Activated CD4-positive, alpha-beta memory T cell treated with anti-CD3 and anti-CD28 coated beads for 36 hours (primary cell): ENCODE measurements at regions of chr7 and their contacts with region 1.

Region 1: DNA sequence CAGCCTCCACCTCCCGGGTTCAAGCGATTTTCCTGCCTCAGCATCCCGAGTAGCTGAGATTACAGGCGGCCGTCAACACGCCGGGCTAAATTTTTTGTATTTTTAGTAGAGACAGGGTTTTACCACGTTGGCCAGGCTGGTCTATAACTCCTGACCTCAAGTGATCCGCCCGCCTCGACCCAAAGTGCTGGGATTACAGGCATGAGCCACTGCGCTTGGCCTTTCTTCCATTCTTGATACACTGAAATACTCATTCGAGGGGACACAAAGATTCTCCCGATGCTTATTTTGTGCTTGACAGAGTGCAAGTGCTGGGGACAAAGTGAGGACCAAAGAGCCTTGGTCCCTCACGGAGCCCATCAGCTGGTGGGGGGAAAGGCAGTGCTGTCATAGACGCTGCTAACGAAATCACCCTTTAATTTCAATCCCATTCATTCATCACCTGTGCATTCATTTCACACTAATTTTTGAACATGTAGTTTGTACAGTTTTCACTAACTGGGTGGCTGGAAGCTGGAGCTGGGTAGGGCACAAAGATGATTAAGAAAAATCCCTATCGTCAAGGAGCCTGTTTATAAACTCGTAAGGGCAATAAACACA is 621 bp upstream of the FAM133B start:
- DNase-seq: no peak
- H3K4me3 Mint-ChIP-seq: peak overlapping the region; percentile 48
- H3K27ac Mint-ChIP-seq: no peak overlapping the region
- H3K4me1 Mint-ChIP-seq: peaks cover 42% of the 10 kb centered on the region
- H3K27me3 Mint-ChIP-seq: no peaks in the 10 kb centered on the region

Region 2: DNA sequence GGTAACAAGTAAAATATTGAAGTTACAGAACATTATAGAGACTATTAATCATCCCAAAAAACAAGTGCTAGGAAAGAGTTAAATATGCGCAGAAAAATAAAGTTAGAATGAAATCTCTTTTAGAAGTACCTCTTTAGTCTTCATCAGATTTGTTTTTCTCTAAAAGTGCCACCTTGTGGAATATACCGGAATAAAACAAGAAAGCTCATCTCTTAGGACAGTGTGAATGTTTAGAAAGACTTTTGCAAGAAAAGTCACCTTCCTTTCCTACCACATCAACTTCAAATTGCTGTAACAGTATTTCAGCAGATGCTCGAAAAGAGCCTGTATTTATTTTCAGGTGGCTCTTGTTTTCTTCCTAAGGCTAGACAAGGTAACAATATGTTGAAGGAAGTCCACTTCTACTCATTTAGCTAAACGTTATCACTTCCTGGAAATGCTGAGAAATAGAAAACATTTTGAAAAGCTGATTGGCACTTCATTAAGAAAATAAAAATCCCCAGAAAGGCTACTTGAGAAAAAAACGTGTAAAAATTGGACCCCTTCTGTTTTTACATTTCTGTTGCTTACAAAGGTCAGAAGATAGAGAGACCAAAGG is 19.2 kb after region 1 on chr7:
- CTCF ChIA-PET with region 1: interaction called, 14 read pairs
- POLR2A ChIA-PET with region 1: interaction called, 8 read pairs
- intact Hi-C with region 1: loop called (anchors 1 kb)
- DNase-seq: no peak
- H3K4me3 Mint-ChIP-seq: no peak overlapping the region
- H3K27ac Mint-ChIP-seq: peak overlapping the region; percentile 40
- H3K4me1 Mint-ChIP-seq: peaks cover 37% of the 10 kb centered on the region
- H3K27me3 Mint-ChIP-seq: no peaks in the 10 kb centered on the region